ENCODE measurements at regions of chr11 and their contacts with region 1.

Region 1: GRCh38 chr11:43010042-43010441 is 301.8 kb upstream of the API5 start:
- DNase-seq: no peak

Region 2: DNA sequence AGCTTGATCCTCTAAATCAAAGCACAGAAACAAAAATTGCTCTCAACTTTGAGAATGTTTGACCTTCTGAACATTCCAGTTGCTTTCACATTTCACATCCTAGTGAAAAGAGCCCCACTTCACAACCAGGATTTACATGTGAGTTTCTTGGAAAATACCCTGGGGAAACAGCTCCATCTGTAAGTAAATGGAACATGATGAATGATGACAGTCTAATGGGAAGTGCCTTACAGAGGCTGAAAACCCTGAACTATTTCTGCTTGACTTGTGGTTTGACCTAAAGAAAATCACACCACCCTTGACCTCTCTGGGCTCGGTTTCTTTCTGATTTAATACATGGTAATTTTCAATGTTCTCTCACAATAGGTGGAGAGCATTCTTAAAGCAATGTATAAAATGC is 197.7 kb before region 1 on chr11:
- intact Hi-C with region 1: no loop called
- DNase-seq: no peak

Region 3: GRCh38 chr11:43784866-43785265 is 774.8 kb after region 1 on chr11:
- intact Hi-C with region 1: loop called in 1 of 2 experiments (anchors 5 kb)
- DNase-seq: no peak

Measured in posterior vena cava (tissue), 2 donors.